Activated CD4-positive, alpha-beta T cell treated with anti-CD3 and anti-CD28 coated beads, Interleukin-2, amount 10 ng/mL, durations not matched to agents 7 days and 5 days (primary cell): ENCODE measurements at regions of chr10 and their contacts with region 1.

Region 1: DNA sequence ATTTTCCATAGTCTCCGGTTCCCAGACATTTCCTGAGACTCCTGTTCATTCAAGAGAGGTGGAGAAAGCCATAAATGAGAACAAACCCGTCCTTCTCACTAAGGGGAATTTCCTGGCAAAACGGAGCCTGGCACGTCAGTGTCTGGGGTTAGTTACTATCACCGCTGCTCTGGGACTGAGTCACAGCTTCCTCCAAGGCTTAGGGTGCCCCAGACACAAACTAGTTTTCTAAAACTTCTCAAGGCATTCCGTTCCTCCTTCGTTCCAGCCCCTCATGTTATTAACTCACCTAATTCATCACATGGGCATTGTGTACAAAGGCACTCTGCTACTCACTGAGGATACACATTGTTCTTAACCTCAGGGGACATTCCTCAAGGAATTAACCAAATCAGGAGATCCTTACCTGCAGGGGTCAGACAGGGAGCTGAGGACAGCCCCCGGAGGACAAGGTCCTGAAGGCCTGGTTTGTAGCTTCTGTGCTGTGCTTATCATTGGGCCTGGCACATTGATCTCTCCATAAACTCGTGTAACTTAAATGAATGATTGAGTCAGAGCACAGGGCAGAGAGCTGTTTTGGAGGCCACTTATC is 103.0 kb upstream of the KLF6 start:
- DNase-seq: peak; percentile 37
- H3K4me3 Mint-ChIP-seq: no peak overlapping the region
- H3K27ac Mint-ChIP-seq: peak overlapping the region; percentile 82
- H3K4me1 Mint-ChIP-seq: peaks cover 26% of the 10 kb centered on the region
- H3K27me3 Mint-ChIP-seq: no peaks in the 10 kb centered on the region

Region 2: GRCh38 chr10:3906511-3907111 is 18.6 kb after region 1 on chr10:
- CTCF ChIA-PET with region 1: interaction called, 10 read pairs
- POLR2A ChIA-PET with region 1: no interaction called
- DNase-seq: no peak
- H3K4me3 Mint-ChIP-seq: no peak overlapping the region
- H3K27ac Mint-ChIP-seq: no peak overlapping the region
- H3K4me1 Mint-ChIP-seq: peaks cover 13% of the 10 kb centered on the region
- H3K27me3 Mint-ChIP-seq: no peaks in the 10 kb centered on the region

Region 3: GRCh38 chr10:3935141-3935540 is 47.2 kb after region 1 on chr10:
- CTCF ChIA-PET with region 1: interaction called, 25 read pairs
- POLR2A ChIA-PET with region 1: interaction called, 3 read pairs
- DNase-seq: peak; percentile 58
- H3K4me3 Mint-ChIP-seq: peak overlapping the region; percentile 61
- H3K27ac Mint-ChIP-seq: peak overlapping the region; percentile 93
- H3K4me1 Mint-ChIP-seq: peaks cover 56% of the 10 kb centered on the region
- H3K27me3 Mint-ChIP-seq: no peaks in the 10 kb centered on the region